Heart left ventricle (tissue), 16 donors: ENCODE measurements at regions of chr11 and their contacts with region 1.

Region 1: DNA sequence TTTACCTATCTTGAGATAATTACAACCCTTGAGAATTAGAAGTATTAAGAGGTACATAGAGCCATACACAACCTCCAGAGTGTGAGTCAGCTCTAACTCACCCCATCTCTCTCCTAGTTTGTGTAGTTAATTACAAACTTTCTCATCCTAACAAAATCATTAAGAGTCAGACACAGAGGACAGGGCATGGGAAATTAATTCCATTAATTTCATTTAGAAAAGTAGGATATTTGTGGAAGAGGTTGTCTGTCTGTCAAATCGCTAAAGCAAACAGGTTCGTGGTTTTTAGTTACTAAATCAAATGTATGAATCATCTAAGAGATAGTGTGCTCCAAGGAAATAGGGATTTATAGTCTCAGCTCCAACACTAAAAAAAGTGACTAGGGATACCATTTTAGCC is 1261.4 kb upstream of the TENM4 start:
- DNase-seq: no peak
- ATAC-seq: no peak
- H3K4me3 ChIP-seq: no peak overlapping the region
- H3K27ac ChIP-seq: no peak overlapping the region
- H3K4me1 ChIP-seq: peaks cover 0 to 4% (median 0%) of the 10 kb centered on the region in 12 donors
- H3K27me3 ChIP-seq: no peaks in the 10 kb centered on the region
- CTCF ChIP-seq: no peak
- POLR2A ChIP-seq: no peak

Region 2: DNA sequence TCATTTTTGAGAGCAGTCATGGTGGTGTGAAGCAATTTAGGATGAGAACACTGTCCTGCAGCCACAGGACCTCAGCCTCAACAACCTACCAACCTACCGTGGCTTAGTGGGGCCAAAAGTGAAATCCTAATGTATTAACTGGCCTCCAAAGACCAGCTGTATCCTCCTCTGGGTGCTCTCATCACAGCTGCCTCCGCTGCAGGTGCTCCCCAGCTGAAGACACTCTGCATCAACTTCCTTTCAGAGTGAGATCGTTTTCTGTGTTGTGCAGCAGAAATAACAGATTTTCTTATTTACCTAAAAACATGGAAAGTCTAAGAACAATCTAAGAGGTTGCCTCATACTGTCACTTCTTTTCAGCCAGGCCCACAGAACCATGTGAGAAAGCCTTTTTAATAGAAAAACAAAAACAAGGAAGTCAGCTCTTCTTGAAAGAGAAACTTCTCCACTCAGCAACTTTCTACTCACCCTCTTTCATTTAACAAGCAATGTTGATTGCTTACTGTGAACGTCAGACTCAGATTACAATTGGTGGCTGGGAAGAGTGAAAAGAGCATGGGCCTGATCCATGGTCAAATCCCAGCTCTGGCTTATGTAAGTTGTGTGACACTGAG is 1397.6 kb before region 1 on chr11:
- intact Hi-C with region 1: loop called in 1 of 10 experiments (anchors 10 kb)
- DNase-seq: no peak
- ATAC-seq: peak in 2 of 4 donors; percentile 16 to 26
- H3K4me3 ChIP-seq: no peak overlapping the region
- H3K27ac ChIP-seq: no peak overlapping the region
- H3K4me1 ChIP-seq: no peaks in the 10 kb centered on the region
- H3K27me3 ChIP-seq: no peaks in the 10 kb centered on the region
- CTCF ChIP-seq: no peak
- POLR2A ChIP-seq: no peak

Region 3: DNA sequence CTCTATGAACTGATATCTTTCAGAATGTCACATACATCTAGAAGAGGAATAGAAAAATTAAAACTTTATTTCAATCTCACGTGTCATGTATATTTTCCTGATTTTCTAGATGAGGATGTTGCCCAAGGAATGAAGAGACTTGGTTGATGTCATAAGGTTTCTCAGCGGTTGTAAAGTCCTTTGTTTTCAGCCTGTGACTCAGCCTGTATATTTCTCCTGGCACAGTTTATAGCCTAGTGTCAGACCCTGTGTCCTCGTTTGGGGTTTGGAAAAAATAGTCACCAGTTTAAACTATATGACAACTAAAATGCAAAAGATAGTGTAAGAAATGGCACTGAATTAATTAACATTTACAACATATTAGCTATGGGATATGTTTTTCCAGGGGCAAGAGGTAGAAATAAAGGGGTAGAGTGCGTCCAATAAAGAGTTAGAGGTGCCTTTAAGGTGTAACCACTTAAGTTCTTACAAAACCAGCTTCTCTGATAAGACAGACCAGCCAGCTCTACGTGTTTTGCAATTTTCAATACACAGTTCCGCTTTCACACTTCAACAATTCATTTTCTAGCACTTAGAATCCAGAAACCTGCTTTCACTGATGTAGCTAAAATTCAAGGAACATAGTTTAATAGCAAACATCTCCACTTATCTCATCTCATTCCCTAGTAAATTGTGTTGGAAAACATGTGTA is 171.2 kb after region 1 on chr11:
- intact Hi-C with region 1: loop called in 1 of 10 experiments (anchors 5 kb)
- DNase-seq: no peak
- ATAC-seq: no peak
- H3K4me3 ChIP-seq: no peak overlapping the region
- H3K27ac ChIP-seq: no peak overlapping the region
- H3K4me1 ChIP-seq: no peaks in the 10 kb centered on the region
- H3K27me3 ChIP-seq: no peaks in the 10 kb centered on the region
- CTCF ChIP-seq: no peak
- POLR2A ChIP-seq: no peak